T-cell (primary cell): ENCODE measurements at regions of chr3 and their contacts with region 1.

Region 1: GRCh38 chr3:156547637-156548036 is 7.3 kb downstream of the SSR3 start:
- DNase-seq: no peak
- ATAC-seq: no peak
- H3K4me3 ChIP-seq: no peak overlapping the region
- H3K4me3 Mint-ChIP-seq: no peak overlapping the region
- H3K27ac ChIP-seq: no peak overlapping the region
- H3K27ac Mint-ChIP-seq: no peak overlapping the region
- H3K4me1 ChIP-seq: no peaks in the 10 kb centered on the region
- H3K4me1 Mint-ChIP-seq: peaks cover 46 to 63% (median 49%) of the 10 kb centered on the region in 3 donors
- H3K27me3 ChIP-seq: no peaks in the 10 kb centered on the region
- H3K27me3 Mint-ChIP-seq: no peaks in the 10 kb centered on the region

Region 2: DNA sequence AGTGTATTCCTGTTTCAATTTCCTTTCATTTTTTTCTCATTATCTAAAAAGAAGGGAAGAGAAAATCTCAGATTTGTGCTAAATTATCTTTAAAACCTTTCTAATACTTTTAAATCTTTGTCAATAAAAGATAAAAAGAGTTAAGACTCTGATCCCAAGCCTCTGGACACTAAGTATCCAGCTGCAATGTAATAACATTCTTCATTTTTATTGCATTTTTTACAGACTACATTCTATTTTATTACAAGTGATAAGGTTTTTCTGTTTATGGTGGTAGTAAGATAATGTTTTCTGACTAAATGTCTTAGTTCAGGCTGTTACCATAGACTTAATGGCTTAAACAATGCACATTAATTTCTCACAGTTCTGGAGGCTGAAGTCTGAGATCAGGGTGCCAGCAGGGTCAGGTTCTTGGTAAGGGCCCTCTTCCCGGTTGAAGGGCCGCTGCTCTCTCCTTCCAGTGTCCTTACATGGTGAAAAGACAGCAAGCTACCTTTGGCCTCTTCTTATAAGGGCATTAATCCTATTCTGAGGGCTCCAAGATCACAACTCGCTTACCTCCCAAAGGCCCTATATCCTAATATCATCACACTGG is 407.5 kb before region 1 on chr3:
- CTCF ChIA-PET with region 1: no interaction called
- POLR2A ChIA-PET with region 1: interaction called in 1 of 2 experiments, 11 read pairs
- DNase-seq: no peak
- ATAC-seq: no peak
- H3K4me3 ChIP-seq: no peak overlapping the region
- H3K4me3 Mint-ChIP-seq: no peak overlapping the region
- H3K27ac ChIP-seq: no peak overlapping the region
- H3K27ac Mint-ChIP-seq: no peak overlapping the region
- H3K4me1 ChIP-seq: no peaks in the 10 kb centered on the region
- H3K4me1 Mint-ChIP-seq: no peaks in the 10 kb centered on the region
- H3K27me3 ChIP-seq: peaks cover 0 to 7% of the 10 kb centered on the region in 2 experiments
- H3K27me3 Mint-ChIP-seq: peaks cover 27 to 28% of the 10 kb centered on the region in 2 donors

Region 3: GRCh38 chr3:156483961-156484787 is 63.5 kb before region 1 on chr3:
- CTCF ChIA-PET with region 1: no interaction called
- POLR2A ChIA-PET with region 1: no interaction called
- DNase-seq: peak in 34 of 35 experiments; percentile 1 to 72 (median 38)
- ATAC-seq: peak; percentile 89 to 95 (median 90)
- H3K4me3 ChIP-seq: peak overlapping the region in 1 of 2 donors; percentile 24
- H3K4me3 Mint-ChIP-seq: peak overlapping the region; percentile 54 to 76 (median 74)
- H3K27ac ChIP-seq: peak overlapping the region; percentile 91
- H3K27ac Mint-ChIP-seq: peak overlapping the region; percentile 84 to 92
- H3K4me1 ChIP-seq: peaks cover 8 to 17% of the 10 kb centered on the region in 2 experiments
- H3K4me1 Mint-ChIP-seq: peaks cover 37 to 48% (median 47%) of the 10 kb centered on the region in 3 donors
- H3K27me3 ChIP-seq: no peaks in the 10 kb centered on the region
- H3K27me3 Mint-ChIP-seq: peaks cover 0 to 1% of the 10 kb centered on the region in 2 donors

Region 4: DNA sequence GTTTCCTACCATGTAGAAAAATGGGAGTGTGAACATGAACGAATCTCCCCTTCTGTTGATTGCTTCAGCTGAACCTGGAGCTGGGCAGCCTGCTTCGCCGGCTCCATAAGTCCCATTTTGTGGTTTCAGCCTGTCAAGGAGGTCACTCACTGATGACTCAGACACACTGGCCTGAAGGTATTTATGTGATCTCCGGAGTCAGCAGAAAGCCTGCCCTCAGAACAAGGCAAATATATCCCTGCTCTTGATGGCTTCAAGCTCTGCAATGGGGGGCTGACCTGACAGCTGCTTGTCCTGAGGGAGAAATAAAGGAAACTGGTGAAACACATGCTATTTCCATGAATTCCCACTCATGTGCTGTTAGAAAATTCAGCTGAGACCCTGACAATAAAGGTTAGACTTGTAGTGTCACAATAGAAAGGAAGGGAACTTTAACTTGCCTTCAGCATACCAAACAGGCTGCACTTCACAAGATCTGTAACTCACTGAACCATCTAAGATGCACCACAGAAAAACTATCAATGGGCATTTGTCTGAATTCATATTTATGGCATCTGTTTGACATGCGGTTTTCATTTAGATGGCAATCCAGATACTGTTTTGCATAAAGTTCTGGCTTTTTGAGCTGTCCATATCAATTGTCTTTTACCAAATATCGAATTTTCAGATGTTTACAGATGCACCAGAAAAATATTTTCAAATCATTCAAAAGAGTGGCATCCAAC is 1237.6 kb after region 1 on chr3:
- CTCF ChIA-PET with region 1: no interaction called
- POLR2A ChIA-PET with region 1: no interaction called
- DNase-seq: no peak
- ATAC-seq: no peak
- H3K4me3 ChIP-seq: no peak overlapping the region
- H3K4me3 Mint-ChIP-seq: no peak overlapping the region
- H3K27ac ChIP-seq: no peak overlapping the region
- H3K27ac Mint-ChIP-seq: no peak overlapping the region
- H3K4me1 ChIP-seq: no peaks in the 10 kb centered on the region
- H3K4me1 Mint-ChIP-seq: no peaks in the 10 kb centered on the region
- H3K27me3 ChIP-seq: no peaks in the 10 kb centered on the region
- H3K27me3 Mint-ChIP-seq: no peaks in the 10 kb centered on the region